ENCODE measurements at regions of chr16 and their contacts with region 1.

Region 1: GRCh38 chr16:4271176-4272066 is 1.4 kb downstream of the TFAP4 start:
- DNase-seq: peak; percentile 94
- ATAC-seq: peak; percentile 75
- H3K4me3 Mint-ChIP-seq: peak overlapping the region; percentile 69
- H3K27ac Mint-ChIP-seq: peak overlapping the region; percentile 80
- H3K4me1 Mint-ChIP-seq: peaks cover 14% of the 10 kb centered on the region
- H3K27me3 Mint-ChIP-seq: no peaks in the 10 kb centered on the region
- CTCF ChIP-seq: no peak

Region 2: GRCh38 chr16:4032768-4033167 is 238.7 kb before region 1 on chr16:
- CTCF ChIA-PET with region 1: no interaction called
- POLR2A ChIA-PET with region 1: no interaction called
- DNase-seq: no peak
- ATAC-seq: no peak
- H3K4me3 Mint-ChIP-seq: no peak overlapping the region
- H3K27ac Mint-ChIP-seq: no peak overlapping the region
- H3K4me1 Mint-ChIP-seq: peaks cover 14% of the 10 kb centered on the region
- H3K27me3 Mint-ChIP-seq: no peaks in the 10 kb centered on the region
- CTCF ChIP-seq: no peak

Region 3: GRCh38 chr16:4232541-4233386 is 38.7 kb before region 1 on chr16:
- CTCF ChIA-PET with region 1: no interaction called
- POLR2A ChIA-PET with region 1: no interaction called
- DNase-seq: no peak
- ATAC-seq: no peak; the same call in 1 of the 2 replicates
- H3K4me3 Mint-ChIP-seq: no peak overlapping the region
- H3K27ac Mint-ChIP-seq: no peak overlapping the region
- H3K4me1 Mint-ChIP-seq: no peaks in the 10 kb centered on the region
- H3K27me3 Mint-ChIP-seq: no peaks in the 10 kb centered on the region
- CTCF ChIP-seq: no peak

Region 4: DNA sequence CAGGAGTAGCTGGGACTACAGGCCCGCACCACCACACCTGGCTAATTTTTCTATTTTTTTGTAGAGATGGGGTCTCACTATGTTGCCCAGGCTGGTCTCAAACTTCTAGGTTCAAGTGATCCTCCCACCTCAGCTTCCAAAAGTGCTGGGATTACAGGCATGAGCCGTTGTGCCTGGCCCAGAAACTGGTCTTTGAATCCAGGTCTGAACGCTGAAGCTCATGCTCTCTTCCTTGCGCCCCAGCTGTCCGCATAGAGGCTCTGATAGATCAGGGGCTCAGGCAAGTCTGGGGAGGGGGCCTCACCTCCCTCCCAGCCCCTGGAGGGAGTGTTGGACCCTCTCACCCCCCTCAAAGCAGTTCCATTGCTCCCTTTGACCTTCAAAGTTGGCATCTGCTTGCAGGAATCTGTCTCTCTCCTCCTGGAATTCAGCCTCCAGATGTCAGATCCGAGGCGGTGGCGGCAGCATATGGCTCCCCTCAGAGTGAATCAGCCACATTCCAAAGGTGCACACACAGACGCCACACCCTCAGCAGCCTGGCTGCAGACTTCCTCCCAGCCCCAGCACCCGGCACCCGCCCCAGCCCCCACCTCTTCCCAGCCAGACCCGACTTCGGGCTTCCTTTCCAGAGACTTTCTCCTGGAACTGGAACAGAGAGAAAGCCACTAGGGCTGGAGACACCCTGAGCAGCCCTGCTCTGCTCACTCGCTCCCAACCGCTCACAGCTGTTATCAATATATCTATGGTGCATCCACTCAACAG is 27.5 kb after region 1 on chr16:
- CTCF ChIA-PET with region 1: interaction called, 24 read pairs
- POLR2A ChIA-PET with region 1: interaction called, 17 read pairs
- DNase-seq: peak; percentile 76
- ATAC-seq: peak; percentile 87
- H3K4me3 Mint-ChIP-seq: no peak overlapping the region
- H3K27ac Mint-ChIP-seq: peak overlapping the region; percentile 98
- H3K4me1 Mint-ChIP-seq: peaks cover 27% of the 10 kb centered on the region
- H3K27me3 Mint-ChIP-seq: no peaks in the 10 kb centered on the region
- CTCF ChIP-seq: no peak

Region 5: GRCh38 chr16:4315186-4316109 is 44.0 kb after region 1 on chr16 and contains the start of gene GLIS2:
- CTCF ChIA-PET with region 1: interaction called, 35 read pairs
- POLR2A ChIA-PET with region 1: interaction called, 7 read pairs
- DNase-seq: peak; percentile 82
- ATAC-seq: peak; percentile 44
- H3K4me3 Mint-ChIP-seq: peak within 1 kb of the TSS; percentile 88
- H3K27ac Mint-ChIP-seq: no peak within 1 kb of the TSS
- H3K4me1 Mint-ChIP-seq: peaks cover 30% of the 10 kb centered on the region
- H3K27me3 Mint-ChIP-seq: peaks cover 13% of the 10 kb centered on the region
- CTCF ChIP-seq: no peak
- total RNA-seq, gene GLIS2: 19.5 to 23.0 TPM (median 20.1 TPM) in 3 replicates

Region 6: DNA sequence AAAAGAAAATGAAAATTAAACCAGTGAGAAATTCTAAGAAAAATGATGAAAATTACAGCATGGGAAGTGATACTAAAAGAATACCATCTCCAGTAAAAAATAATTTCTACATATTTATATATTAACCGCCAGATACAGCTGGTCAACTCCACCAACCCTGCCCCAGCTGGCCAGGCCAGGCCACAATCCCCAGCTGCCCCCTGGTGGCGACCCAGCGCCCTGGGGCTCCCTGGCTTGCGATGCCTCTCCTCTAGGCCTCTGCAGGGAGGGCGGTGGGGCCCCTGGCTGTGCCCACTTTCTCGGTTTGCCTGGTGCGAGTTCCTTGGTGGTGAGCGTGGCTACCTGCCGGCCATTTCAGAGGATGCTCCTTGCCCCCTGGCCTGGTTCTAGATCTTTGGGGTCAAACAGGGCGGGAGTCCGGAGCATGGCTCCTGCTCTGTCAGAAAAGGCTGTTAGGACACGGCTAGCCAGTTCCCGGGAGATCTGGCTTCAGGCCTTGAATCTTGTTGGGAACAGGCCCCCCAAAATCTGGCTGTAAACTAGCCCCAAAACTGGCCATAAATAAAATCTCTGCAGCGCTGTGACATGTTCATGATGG is 59.0 kb after region 1 on chr16:
- CTCF ChIA-PET with region 1: interaction called, 61 read pairs
- POLR2A ChIA-PET with region 1: interaction called, 12 read pairs
- DNase-seq: peak; percentile 86
- ATAC-seq: peak; percentile 27
- H3K4me3 Mint-ChIP-seq: no peak overlapping the region
- H3K27ac Mint-ChIP-seq: no peak overlapping the region
- H3K4me1 Mint-ChIP-seq: peaks cover 18% of the 10 kb centered on the region
- H3K27me3 Mint-ChIP-seq: no peaks in the 10 kb centered on the region
- CTCF ChIP-seq: peak; percentile 93

Region 7: GRCh38 chr16:4392382-4393239 is 121.2 kb after region 1 on chr16:
- CTCF ChIA-PET with region 1: interaction called, 19 read pairs
- POLR2A ChIA-PET with region 1: interaction called, 6 read pairs
- DNase-seq: peak; percentile 81
- ATAC-seq: peak; percentile 76
- H3K4me3 Mint-ChIP-seq: peak overlapping the region; percentile 20; the same call in 1 of the 2 replicates
- H3K27ac Mint-ChIP-seq: peak overlapping the region; percentile 92
- H3K4me1 Mint-ChIP-seq: peaks cover 48% of the 10 kb centered on the region
- H3K27me3 Mint-ChIP-seq: no peaks in the 10 kb centered on the region
- CTCF ChIP-seq: no peak

Region 8: DNA sequence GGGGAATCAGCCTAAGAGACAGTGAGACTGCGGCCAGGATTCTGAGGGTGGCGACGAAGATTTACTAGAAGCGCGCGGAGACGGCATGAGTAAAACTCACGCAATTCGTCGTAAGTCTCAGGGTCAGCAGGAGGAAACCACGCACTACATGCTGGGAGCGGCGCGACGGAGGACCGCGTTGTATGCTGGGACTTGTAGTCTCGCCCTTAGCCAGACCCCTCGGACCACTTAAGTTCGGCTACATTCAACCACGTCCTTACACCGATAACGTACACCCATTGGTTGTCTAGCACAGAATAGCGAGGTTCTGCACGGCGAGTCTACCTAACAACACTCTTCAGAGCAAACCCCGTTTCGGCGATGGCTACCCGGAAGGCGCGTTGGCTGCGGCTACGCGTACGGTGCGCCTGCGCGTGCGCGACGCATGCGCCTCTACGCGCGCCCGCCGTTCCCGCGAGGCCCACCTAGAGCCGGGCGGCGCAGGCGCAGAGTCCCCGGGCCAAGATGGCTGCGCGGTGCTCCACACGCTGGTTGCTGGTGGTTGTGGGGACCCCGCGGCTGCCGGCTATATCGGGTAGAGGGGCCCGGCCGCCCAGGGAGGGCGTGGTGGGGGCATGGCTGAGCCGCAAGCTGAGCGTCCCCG is 154.1 kb after region 1 on chr16 and contains the start of gene DNAJA3:
- CTCF ChIA-PET with region 1: no interaction called
- POLR2A ChIA-PET with region 1: no interaction called
- DNase-seq: peak; percentile 91
- ATAC-seq: peak; percentile 92
- H3K4me3 Mint-ChIP-seq: peak within 1 kb of the TSS; percentile 95
- H3K27ac Mint-ChIP-seq: peak within 1 kb of the TSS; percentile 100
- H3K4me1 Mint-ChIP-seq: peaks cover 18% of the 10 kb centered on the region
- H3K27me3 Mint-ChIP-seq: no peaks in the 10 kb centered on the region
- CTCF ChIP-seq: no peak
- total RNA-seq, gene DNAJA3: 54.8 to 64.1 TPM (median 56.0 TPM) in 3 replicates

Region 9: DNA sequence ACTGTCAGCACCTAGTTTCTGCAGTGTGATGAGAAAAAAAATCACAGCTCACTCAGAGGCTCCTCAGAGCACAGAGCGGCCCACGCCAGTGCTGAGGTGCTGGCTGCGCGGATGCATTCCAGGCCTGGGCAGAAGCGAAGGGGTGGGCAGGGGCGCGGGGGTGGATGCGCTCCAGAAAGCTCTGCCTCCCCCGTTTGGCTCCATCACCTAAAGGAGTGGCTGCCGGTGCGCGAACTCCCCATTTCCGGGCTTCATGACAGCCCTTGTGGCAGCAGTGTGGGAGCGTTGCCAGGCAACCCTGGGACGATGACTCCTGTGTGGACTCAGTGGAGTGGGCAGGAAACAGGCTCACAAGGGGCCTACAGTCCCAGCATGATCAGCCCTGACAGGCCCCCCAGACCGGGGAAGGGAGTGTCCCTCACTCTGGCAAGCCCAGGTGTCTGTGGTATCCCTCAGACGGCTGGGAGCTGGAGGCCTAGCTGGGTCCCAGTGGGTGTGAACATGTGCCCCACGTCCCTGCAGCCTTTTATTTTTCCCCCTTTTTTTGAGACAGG is 389.1 kb after region 1 on chr16:
- CTCF ChIA-PET with region 1: no interaction called
- POLR2A ChIA-PET with region 1: no interaction called
- DNase-seq: no peak
- ATAC-seq: no peak
- H3K4me3 Mint-ChIP-seq: no peak overlapping the region
- H3K27ac Mint-ChIP-seq: peak overlapping the region; percentile 78; the same call in 1 of the 2 replicates
- H3K4me1 Mint-ChIP-seq: peaks cover 4% of the 10 kb centered on the region
- H3K27me3 Mint-ChIP-seq: no peaks in the 10 kb centered on the region
- CTCF ChIP-seq: no peak

Measured in WTC11 (cell line).